WTC11 (cell line): ENCODE measurements at regions of chr11 and their contacts with region 1.

Region 1: DNA sequence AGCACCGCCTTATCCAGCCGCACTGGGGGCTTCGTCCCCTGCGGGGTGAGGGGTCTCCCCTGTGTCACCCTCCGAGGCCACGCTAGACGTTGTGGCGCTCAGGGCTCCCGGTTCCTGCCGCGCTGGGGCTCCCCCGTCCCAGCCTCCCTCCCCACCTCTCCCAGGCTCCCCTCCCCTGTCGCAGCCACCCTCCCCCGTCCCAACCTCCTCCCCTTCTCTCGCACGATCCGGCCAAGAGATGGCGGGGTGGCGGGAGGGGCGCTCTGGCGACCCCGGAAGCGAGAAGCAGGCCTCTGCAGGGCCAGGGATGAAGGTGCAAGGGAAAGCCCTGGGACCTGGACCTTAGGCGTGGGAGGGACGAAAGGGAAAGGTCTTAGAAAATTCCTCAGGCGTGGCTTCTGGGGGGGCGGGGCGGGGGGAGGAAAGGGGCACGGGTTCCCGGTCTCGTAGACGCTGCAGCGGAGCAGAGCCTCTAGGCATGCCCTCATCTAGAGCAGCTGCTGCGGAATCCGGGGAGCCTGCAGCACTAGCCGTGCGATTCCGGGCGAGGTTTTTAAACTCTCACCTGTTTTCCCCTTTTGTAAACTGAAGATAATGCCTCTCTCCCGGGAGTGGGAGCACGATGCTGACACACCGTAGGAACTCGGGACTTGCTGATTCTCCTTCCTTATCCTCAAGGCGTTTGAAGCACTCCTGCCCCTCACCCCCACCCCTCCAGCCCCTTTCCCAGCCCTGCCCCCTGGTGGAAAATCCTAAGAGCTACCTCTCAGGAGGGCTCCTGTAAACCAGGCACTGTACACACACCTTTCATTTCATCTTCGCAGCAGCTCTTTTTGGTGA is 14.4 kb downstream of the KCNJ5 start:
- DNase-seq: peak; percentile 69
- ATAC-seq: peak; percentile 56
- H3K4me3 Mint-ChIP-seq: peak overlapping the region; percentile 70
- H3K27ac Mint-ChIP-seq: no peak overlapping the region
- H3K4me1 Mint-ChIP-seq: peaks cover 40% of the 10 kb centered on the region
- H3K27me3 Mint-ChIP-seq: peaks cover 86% of the 10 kb centered on the region
- CTCF ChIP-seq: peak; percentile 37; the same call in 1 of the 2 replicates

Region 2: GRCh38 chr11:128796270-128796669 is 109.3 kb before region 1 on chr11:
- CTCF ChIA-PET with region 1: no interaction called
- POLR2A ChIA-PET with region 1: no interaction called
- DNase-seq: no peak
- ATAC-seq: no peak
- H3K4me3 Mint-ChIP-seq: no peak overlapping the region
- H3K27ac Mint-ChIP-seq: no peak overlapping the region
- H3K4me1 Mint-ChIP-seq: no peaks in the 10 kb centered on the region
- H3K27me3 Mint-ChIP-seq: no peaks in the 10 kb centered on the region
- CTCF ChIP-seq: no peak

Region 3: GRCh38 chr11:128884703-128885338 is 20.7 kb before region 1 on chr11:
- CTCF ChIA-PET with region 1: interaction called, 245 read pairs
- POLR2A ChIA-PET with region 1: no interaction called
- DNase-seq: peak; percentile 67
- ATAC-seq: peak; percentile 62
- H3K4me3 Mint-ChIP-seq: no peak overlapping the region
- H3K27ac Mint-ChIP-seq: no peak overlapping the region
- H3K4me1 Mint-ChIP-seq: peaks cover 32% of the 10 kb centered on the region
- H3K27me3 Mint-ChIP-seq: peaks cover 75% of the 10 kb centered on the region
- CTCF ChIP-seq: peak; percentile 78

Region 4: DNA sequence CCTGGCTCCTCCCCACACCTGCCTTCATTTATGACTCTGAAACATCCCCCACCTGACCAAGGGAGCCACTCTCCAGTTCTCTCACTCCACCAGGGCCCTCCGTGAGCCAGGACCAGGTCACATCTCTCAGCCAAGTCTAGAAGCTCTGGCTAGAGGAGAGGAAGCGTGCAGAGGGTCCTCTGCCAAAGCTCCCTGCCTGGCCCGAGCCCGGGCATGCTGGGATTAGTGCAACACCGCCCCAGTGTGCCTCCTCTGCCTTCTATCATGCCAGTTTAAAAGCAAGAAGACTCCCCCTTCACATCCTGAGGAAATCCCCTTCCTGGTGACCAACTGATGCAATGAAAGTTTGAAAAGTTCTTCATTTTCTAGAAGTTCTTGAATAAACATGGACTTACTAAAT is 13.7 kb after region 1 on chr11:
- CTCF ChIA-PET with region 1: interaction called, 15 read pairs
- POLR2A ChIA-PET with region 1: no interaction called
- DNase-seq: no peak
- ATAC-seq: no peak
- H3K4me3 Mint-ChIP-seq: no peak overlapping the region
- H3K27ac Mint-ChIP-seq: no peak overlapping the region
- H3K4me1 Mint-ChIP-seq: peaks cover 2% of the 10 kb centered on the region; the same call in 1 of the 2 replicates
- H3K27me3 Mint-ChIP-seq: peaks cover 31% of the 10 kb centered on the region
- CTCF ChIP-seq: no peak

Region 5: GRCh38 chr11:128928400-128928799 is 22.8 kb after region 1 on chr11:
- CTCF ChIA-PET with region 1: interaction called, 11 read pairs
- POLR2A ChIA-PET with region 1: interaction called, 3 read pairs
- DNase-seq: no peak
- ATAC-seq: no peak
- H3K4me3 Mint-ChIP-seq: no peak overlapping the region
- H3K27ac Mint-ChIP-seq: no peak overlapping the region
- H3K4me1 Mint-ChIP-seq: peaks cover 57% of the 10 kb centered on the region
- H3K27me3 Mint-ChIP-seq: peaks cover 94% of the 10 kb centered on the region
- CTCF ChIP-seq: no peak

Region 6: GRCh38 chr11:128936606-128937251 is 31.2 kb after region 1 on chr11:
- CTCF ChIA-PET with region 1: interaction called, 10 read pairs
- POLR2A ChIA-PET with region 1: no interaction called
- DNase-seq: peak; percentile 70
- ATAC-seq: peak; percentile 71
- H3K4me3 Mint-ChIP-seq: no peak overlapping the region
- H3K27ac Mint-ChIP-seq: 0 out of 2 replicates have a peak overlapping the region, but pooled peaks have one; percentile 41
- H3K4me1 Mint-ChIP-seq: peaks cover 22% of the 10 kb centered on the region
- H3K27me3 Mint-ChIP-seq: peaks cover 76% of the 10 kb centered on the region
- CTCF ChIP-seq: no peak

Region 7: GRCh38 chr11:128942817-128943427 is 37.4 kb after region 1 on chr11 and contains the start of gene TP53AIP1:
- CTCF ChIA-PET with region 1: interaction called, 35 read pairs
- POLR2A ChIA-PET with region 1: no interaction called
- DNase-seq: no peak
- ATAC-seq: no peak
- H3K4me3 Mint-ChIP-seq: no peak within 1 kb of the TSS
- H3K27ac Mint-ChIP-seq: no peak within 1 kb of the TSS
- H3K4me1 Mint-ChIP-seq: peaks cover under 1% of the 10 kb centered on the region; the same call in 1 of the 2 replicates
- H3K27me3 Mint-ChIP-seq: peaks cover 31% of the 10 kb centered on the region
- CTCF ChIP-seq: no peak
- total RNA-seq, gene TP53AIP1: 0.07 TPM in 1 of 3 replicates, not detected in the others

Region 8: DNA sequence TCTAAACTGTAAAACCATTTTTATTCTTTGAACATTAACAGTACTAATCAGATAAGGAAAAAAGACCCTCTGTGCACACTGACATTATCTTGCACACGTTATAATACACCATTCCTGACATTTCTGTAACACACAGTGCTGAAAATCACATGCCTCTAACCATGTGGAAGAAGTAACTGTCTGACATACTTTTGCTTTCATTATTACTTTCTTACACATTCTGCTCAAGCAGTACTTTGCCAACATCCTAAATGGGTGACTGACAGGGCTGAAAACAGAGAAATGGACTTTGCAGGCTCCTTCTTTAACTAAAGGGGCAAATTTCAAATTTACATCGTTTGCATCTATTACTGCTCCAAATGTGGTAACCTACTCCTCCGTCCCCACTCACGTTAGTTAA is 59.9 kb after region 1 on chr11:
- CTCF ChIA-PET with region 1: no interaction called
- POLR2A ChIA-PET with region 1: no interaction called
- DNase-seq: no peak
- ATAC-seq: no peak
- H3K4me3 Mint-ChIP-seq: no peak overlapping the region
- H3K27ac Mint-ChIP-seq: no peak overlapping the region
- H3K4me1 Mint-ChIP-seq: peaks cover 9% of the 10 kb centered on the region
- H3K27me3 Mint-ChIP-seq: no peaks in the 10 kb centered on the region
- CTCF ChIP-seq: no peak